ENCODE measurements at regions of chr5 and their contacts with region 1.

Region 1: DNA sequence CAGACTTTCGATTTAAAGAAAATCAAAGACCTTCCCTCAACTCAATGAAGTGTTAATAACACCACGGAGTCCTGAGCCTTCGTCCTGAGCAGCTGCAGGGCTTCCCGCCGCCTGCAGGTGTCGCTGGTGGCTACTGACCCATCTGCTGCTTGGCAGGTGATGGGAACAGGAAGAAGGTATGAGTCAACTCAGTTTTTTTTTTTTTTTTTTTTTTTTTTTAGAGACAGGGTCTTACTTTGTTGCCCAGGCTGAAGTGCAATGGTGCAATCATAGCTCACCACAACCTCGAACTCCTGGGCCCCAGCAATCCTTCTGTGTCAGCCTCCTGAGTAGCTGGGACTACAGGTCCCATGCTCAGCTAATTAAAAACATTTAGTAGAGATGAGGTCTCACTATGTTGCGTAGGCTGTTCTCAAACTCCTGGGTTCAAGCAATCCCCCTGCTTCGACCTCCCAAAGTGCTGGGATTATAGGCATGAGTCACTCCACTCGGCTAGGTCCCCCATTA is 185.7 kb upstream of the IL12B start:
- DNase-seq: peak; percentile 70 to 90
- ATAC-seq: peak; percentile 68
- H3K4me3 ChIP-seq: no peak overlapping the region
- H3K27ac ChIP-seq: peak overlapping the region in 1 of 2 donors; percentile 11
- H3K4me1 ChIP-seq: peaks cover 3 to 4% of the 10 kb centered on the region in 2 donors
- H3K27me3 ChIP-seq: no peaks in the 10 kb centered on the region

Region 2: GRCh38 chr5:159444441-159445082 is 71.4 kb before region 1 on chr5:
- intact Hi-C with region 1: loop called in 1 of 2 experiments (anchors 5 kb)
- DNase-seq: no peak
- ATAC-seq: no peak
- H3K4me3 ChIP-seq: no peak overlapping the region
- H3K27ac ChIP-seq: no peak overlapping the region
- H3K4me1 ChIP-seq: no peaks in the 10 kb centered on the region
- H3K27me3 ChIP-seq: no peaks in the 10 kb centered on the region

Region 3: DNA sequence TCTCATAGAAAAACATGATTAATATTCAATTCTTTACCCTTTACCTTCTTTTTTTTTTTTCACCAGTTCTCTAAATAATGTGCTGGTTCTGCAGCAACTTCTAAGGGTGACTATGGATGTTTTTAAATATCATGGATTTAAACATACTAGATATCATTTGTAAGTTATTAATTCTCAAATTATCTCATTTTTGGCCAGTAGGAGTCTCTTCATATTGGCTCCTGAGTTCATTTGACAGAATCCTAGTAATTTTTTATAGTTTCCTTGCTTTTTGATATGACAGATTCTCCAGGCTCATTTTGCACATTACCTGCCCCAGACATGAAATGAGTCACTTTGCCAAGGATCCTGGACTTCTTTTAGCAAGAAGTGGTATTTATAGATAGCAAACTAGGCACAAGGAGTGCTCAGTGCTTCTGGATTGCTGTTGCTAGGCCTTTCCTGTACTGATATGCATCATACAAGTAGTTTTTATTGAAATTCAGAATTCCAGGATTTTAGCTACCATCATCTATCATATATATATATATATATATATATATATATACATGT is 15.7 kb after region 1 on chr5:
- intact Hi-C with region 1: no loop called
- DNase-seq: no peak
- ATAC-seq: no peak
- H3K4me3 ChIP-seq: no peak overlapping the region
- H3K27ac ChIP-seq: no peak overlapping the region
- H3K4me1 ChIP-seq: no peaks in the 10 kb centered on the region
- H3K27me3 ChIP-seq: no peaks in the 10 kb centered on the region

Region 4: DNA sequence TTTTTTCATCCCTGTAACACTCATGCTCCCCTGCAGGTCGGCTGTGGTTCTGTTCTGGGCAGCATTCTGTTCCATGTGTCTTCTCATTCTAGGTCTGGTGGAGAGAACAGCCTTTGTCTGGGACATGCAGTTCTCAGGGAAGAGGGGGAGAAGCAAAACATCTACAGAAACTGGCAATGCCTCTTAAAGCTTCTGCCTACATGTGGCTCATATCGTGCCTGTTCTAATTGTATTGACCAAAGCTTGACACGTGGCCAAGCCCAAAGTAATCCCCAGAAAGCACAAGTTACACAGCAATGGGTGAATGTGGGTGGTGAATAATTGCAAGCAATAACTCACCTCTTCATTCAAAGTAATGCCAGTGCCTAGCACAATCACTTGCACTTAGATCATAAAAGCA is 32.6 kb after region 1 on chr5:
- intact Hi-C with region 1: loop called in 1 of 2 experiments (anchors 1 kb)
- DNase-seq: no peak
- ATAC-seq: no peak
- H3K4me3 ChIP-seq: no peak overlapping the region
- H3K27ac ChIP-seq: no peak overlapping the region
- H3K4me1 ChIP-seq: peaks cover 6 to 13% of the 10 kb centered on the region in 2 donors
- H3K27me3 ChIP-seq: no peaks in the 10 kb centered on the region

Region 5: GRCh38 chr5:159605585-159605984 is 89.6 kb after region 1 on chr5:
- intact Hi-C with region 1: loop called in 1 of 2 experiments (anchors 5 kb)
- DNase-seq: no peak
- ATAC-seq: no peak
- H3K4me3 ChIP-seq: no peak overlapping the region
- H3K27ac ChIP-seq: peak overlapping the region in 1 of 2 donors; percentile 40
- H3K4me1 ChIP-seq: peaks cover 0 to 3% of the 10 kb centered on the region in 2 donors
- H3K27me3 ChIP-seq: no peaks in the 10 kb centered on the region

Region 6: DNA sequence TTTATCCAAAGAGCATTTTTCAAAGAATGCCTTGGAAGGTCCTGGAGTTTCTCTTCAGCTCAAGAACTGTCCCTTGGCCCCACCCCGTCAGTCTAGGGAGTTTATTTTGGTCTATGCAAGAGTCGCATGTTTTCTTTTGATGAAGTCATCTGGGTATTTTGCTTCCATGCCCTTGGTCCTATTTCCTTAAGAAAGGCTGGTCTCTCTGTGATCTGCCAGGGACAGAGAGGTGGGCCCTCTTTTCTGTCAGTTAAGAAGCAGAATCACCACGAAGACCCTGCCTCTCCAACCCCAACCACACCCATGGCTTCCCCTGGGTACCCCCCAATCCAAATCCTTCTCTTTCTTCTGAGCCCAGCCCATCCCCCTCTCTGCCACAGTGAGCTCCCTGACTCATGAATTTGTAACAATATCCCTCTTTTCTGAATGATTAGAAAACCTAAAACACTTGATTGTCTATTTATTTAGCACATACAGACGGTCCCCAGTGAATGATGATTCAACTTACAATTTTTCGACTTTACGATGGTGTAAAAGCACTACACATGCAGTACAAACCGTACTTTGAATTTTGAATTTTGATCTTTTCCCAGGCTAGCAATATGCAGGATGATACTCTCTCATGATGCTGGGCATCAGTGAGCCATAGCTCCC is 236.8 kb after region 1 on chr5:
- intact Hi-C with region 1: no loop called
- DNase-seq: peak in 1 of 2 donors; percentile 66
- ATAC-seq: peak; percentile 82
- H3K4me3 ChIP-seq: no peak overlapping the region
- H3K27ac ChIP-seq: peak overlapping the region; percentile 93 to 98
- H3K4me1 ChIP-seq: peaks cover 0 to 7% of the 10 kb centered on the region in 2 donors
- H3K27me3 ChIP-seq: no peaks in the 10 kb centered on the region

Region 7: GRCh38 chr5:159773062-159773924 is 257.3 kb after region 1 on chr5:
- intact Hi-C with region 1: loop called in 1 of 2 experiments (anchors 10 kb)
- DNase-seq: peak; percentile 92 to 96
- ATAC-seq: peak; percentile 95
- H3K4me3 ChIP-seq: no peak overlapping the region
- H3K27ac ChIP-seq: peak overlapping the region; percentile 59 to 83
- H3K4me1 ChIP-seq: peaks cover 5 to 6% of the 10 kb centered on the region in 2 donors
- H3K27me3 ChIP-seq: no peaks in the 10 kb centered on the region

Region 8: GRCh38 chr5:159987031-159987674 is 471.2 kb after region 1 on chr5:
- intact Hi-C with region 1: loop called (anchors 5 to 10 kb)
- DNase-seq: peak; percentile 82 to 92
- ATAC-seq: peak; percentile 84
- H3K4me3 ChIP-seq: peak overlapping the region in 1 of 2 donors; percentile 8
- H3K27ac ChIP-seq: no peak overlapping the region
- H3K4me1 ChIP-seq: no peaks in the 10 kb centered on the region
- H3K27me3 ChIP-seq: no peaks in the 10 kb centered on the region

Measured in aorta (tissue), 5 donors.